B cell (primary cell): ENCODE measurements at regions of chr2 and their contacts with region 1.

Region 1: DNA sequence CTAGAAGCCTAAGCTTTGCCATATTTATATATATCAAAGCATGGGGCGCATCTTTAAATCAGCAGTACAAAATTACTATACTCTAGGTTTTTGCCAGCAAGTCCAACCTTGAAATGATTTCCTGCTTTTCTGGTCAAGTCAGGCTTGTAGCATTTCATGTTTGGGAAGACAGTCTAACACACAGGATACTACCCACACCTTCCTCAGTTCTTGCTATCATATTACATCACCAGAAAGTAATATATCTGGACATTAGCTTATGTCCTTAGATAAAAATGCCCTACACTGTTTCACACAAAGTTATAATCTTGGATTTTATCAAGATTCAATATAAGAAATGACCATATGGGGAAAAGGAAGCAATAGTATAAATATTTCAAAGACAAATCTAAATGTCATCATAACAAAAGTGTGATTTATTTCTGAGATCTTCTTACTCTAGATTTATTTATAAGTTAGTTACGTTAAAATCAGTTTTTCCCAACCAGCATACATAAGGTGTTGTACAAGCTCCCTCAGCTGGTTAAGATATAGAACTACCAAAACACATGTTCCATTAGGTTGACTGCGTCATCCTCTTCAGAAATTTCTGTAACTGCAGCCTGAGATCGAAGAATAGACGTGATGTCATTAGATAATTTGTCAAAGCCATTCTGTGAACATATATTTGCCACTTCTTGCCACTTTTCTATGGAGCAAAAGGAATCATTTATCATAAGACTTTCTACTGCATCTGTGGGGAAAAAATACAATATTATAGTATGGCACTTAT is 56.7 kb downstream of the CLHC1 start:
- DNase-seq: peak; percentile 68
- ATAC-seq: peak; percentile 88
- H3K4me3 ChIP-seq: peak overlapping the region in 1 of 5 experiments; percentile 34
- H3K4me3 Mint-ChIP-seq: peak overlapping the region; percentile 11
- H3K27ac ChIP-seq: no peak overlapping the region
- H3K27ac Mint-ChIP-seq: no peak overlapping the region
- H3K4me1 ChIP-seq: peaks cover 0 to 4% of the 10 kb centered on the region in 2 donors
- H3K4me1 Mint-ChIP-seq: peaks cover 7% of the 10 kb centered on the region
- H3K27me3 ChIP-seq: no peaks in the 10 kb centered on the region
- H3K27me3 Mint-ChIP-seq: no peaks in the 10 kb centered on the region
- CTCF ChIP-seq: peak; percentile 74

Region 2: GRCh38 chr2:54657664-54658083 is 517.8 kb before region 1 on chr2:
- CTCF ChIA-PET with region 1: interaction called, 10 read pairs
- POLR2A ChIA-PET with region 1: no interaction called
- intact Hi-C with region 1: no loop called
- DNase-seq: peak; percentile 42
- ATAC-seq: peak; percentile 65
- H3K4me3 ChIP-seq: no peak overlapping the region
- H3K4me3 Mint-ChIP-seq: no peak overlapping the region
- H3K27ac ChIP-seq: no peak overlapping the region
- H3K27ac Mint-ChIP-seq: peak overlapping the region; percentile 53
- H3K4me1 ChIP-seq: no peaks in the 10 kb centered on the region
- H3K4me1 Mint-ChIP-seq: no peaks in the 10 kb centered on the region
- H3K27me3 ChIP-seq: no peaks in the 10 kb centered on the region
- H3K27me3 Mint-ChIP-seq: no peaks in the 10 kb centered on the region
- CTCF ChIP-seq: peak; percentile 67

Region 3: GRCh38 chr2:54665436-54665856 is 510.0 kb before region 1 on chr2:
- CTCF ChIA-PET with region 1: interaction called, 11 read pairs
- POLR2A ChIA-PET with region 1: no interaction called
- intact Hi-C with region 1: loop called (anchors 1 kb)
- DNase-seq: peak; percentile 65
- ATAC-seq: peak; percentile 60
- H3K4me3 ChIP-seq: no peak overlapping the region
- H3K4me3 Mint-ChIP-seq: no peak overlapping the region
- H3K27ac ChIP-seq: no peak overlapping the region
- H3K27ac Mint-ChIP-seq: no peak overlapping the region
- H3K4me1 ChIP-seq: no peaks in the 10 kb centered on the region
- H3K4me1 Mint-ChIP-seq: no peaks in the 10 kb centered on the region
- H3K27me3 ChIP-seq: no peaks in the 10 kb centered on the region
- H3K27me3 Mint-ChIP-seq: no peaks in the 10 kb centered on the region
- CTCF ChIP-seq: peak; percentile 76

Region 4: DNA sequence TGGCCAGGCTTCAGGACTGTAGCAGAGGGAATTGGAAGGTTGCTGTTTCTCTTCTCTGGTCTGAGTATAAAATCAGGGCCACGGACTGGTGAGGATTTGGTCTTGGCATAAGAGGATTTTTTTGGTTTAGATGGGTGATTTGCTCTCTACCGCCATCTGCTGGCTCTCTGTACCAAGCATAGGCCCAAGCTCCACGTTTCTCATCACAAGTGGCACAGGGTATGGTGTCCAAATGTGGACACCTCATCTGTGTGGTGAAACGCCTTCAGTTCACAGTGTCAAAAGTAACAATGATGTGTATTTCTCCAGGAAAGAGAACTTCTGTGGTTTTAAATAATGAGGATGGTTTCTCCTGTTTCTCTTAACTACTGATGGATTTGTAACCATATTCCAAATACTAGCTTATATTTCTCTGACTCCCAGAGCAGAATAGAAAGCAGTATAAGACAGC is 336.8 kb before region 1 on chr2:
- CTCF ChIA-PET with region 1: interaction called, 18 read pairs
- POLR2A ChIA-PET with region 1: no interaction called
- intact Hi-C with region 1: no loop called
- DNase-seq: peak; percentile 78
- ATAC-seq: peak; percentile 83
- H3K4me3 ChIP-seq: no peak overlapping the region
- H3K4me3 Mint-ChIP-seq: no peak overlapping the region
- H3K27ac ChIP-seq: no peak overlapping the region
- H3K27ac Mint-ChIP-seq: peak overlapping the region; percentile 46
- H3K4me1 ChIP-seq: peaks cover 0 to 4% of the 10 kb centered on the region in 2 donors
- H3K4me1 Mint-ChIP-seq: peaks cover 4% of the 10 kb centered on the region
- H3K27me3 ChIP-seq: no peaks in the 10 kb centered on the region
- H3K27me3 Mint-ChIP-seq: no peaks in the 10 kb centered on the region
- CTCF ChIP-seq: peak; percentile 97

Region 5: DNA sequence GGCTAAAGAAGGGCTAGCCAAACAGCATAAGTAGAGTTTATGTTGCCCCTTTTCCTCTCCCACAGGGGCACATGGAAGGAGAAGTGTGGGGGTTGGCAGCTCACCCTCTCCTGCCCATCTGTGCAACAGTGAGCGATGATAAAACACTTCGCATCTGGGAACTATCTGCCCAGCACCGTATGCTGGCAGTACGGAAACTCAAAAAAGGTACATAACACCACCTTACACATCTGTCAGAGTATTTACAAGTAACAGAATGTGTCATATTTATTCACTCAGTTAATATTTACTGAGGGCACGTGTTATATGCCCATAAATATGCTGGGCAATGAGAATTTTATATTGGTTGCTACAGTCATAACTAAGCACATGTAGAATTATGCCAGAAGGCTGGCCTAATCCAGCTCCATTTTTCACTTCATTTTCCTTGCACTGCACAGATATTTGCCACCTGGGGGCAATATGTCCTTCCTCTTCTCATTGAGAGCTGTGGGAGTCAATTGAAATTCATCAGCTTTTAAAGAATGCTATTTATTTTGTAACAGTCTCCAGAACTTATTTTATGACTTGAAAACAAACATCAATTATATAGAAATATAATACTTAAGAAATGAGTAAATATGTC is 275.8 kb before region 1 on chr2:
- CTCF ChIA-PET with region 1: interaction called, 40 read pairs
- POLR2A ChIA-PET with region 1: no interaction called
- intact Hi-C with region 1: loop called (anchors 1 kb)
- DNase-seq: peak; percentile 27
- ATAC-seq: peak; percentile 36
- H3K4me3 ChIP-seq: no peak overlapping the region
- H3K4me3 Mint-ChIP-seq: no peak overlapping the region
- H3K27ac ChIP-seq: no peak overlapping the region
- H3K27ac Mint-ChIP-seq: no peak overlapping the region
- H3K4me1 ChIP-seq: no peaks in the 10 kb centered on the region
- H3K4me1 Mint-ChIP-seq: no peaks in the 10 kb centered on the region
- H3K27me3 ChIP-seq: no peaks in the 10 kb centered on the region
- H3K27me3 Mint-ChIP-seq: no peaks in the 10 kb centered on the region
- CTCF ChIP-seq: peak; percentile 29

Region 6: GRCh38 chr2:54924121-54924520 is 251.3 kb before region 1 on chr2:
- CTCF ChIA-PET with region 1: no interaction called
- POLR2A ChIA-PET with region 1: no interaction called
- intact Hi-C with region 1: no loop called
- DNase-seq: no peak
- ATAC-seq: no peak
- H3K4me3 ChIP-seq: no peak overlapping the region
- H3K4me3 Mint-ChIP-seq: no peak overlapping the region
- H3K27ac ChIP-seq: no peak overlapping the region
- H3K27ac Mint-ChIP-seq: no peak overlapping the region
- H3K4me1 ChIP-seq: no peaks in the 10 kb centered on the region
- H3K4me1 Mint-ChIP-seq: no peaks in the 10 kb centered on the region
- H3K27me3 ChIP-seq: peaks cover 0 to 3% (median 0%) of the 10 kb centered on the region in 4 experiments
- H3K27me3 Mint-ChIP-seq: no peaks in the 10 kb centered on the region
- CTCF ChIP-seq: no peak

Region 7: GRCh38 chr2:55010149-55010591 is 165.3 kb before region 1 on chr2:
- CTCF ChIA-PET with region 1: interaction called, 190 read pairs
- POLR2A ChIA-PET with region 1: no interaction called
- intact Hi-C with region 1: loop called (anchors 1 kb)
- DNase-seq: peak; percentile 78
- ATAC-seq: peak; percentile 95
- H3K4me3 ChIP-seq: peak overlapping the region; percentile 2 to 48 (median 38)
- H3K4me3 Mint-ChIP-seq: peak overlapping the region; percentile 91
- H3K27ac ChIP-seq: peak overlapping the region; percentile 1 to 73
- H3K27ac Mint-ChIP-seq: peak overlapping the region; percentile 55
- H3K4me1 ChIP-seq: peaks cover 19 to 43% of the 10 kb centered on the region in 2 donors
- H3K4me1 Mint-ChIP-seq: peaks cover 63% of the 10 kb centered on the region
- H3K27me3 ChIP-seq: no peaks in the 10 kb centered on the region
- H3K27me3 Mint-ChIP-seq: no peaks in the 10 kb centered on the region
- CTCF ChIP-seq: no peak

Region 8: DNA sequence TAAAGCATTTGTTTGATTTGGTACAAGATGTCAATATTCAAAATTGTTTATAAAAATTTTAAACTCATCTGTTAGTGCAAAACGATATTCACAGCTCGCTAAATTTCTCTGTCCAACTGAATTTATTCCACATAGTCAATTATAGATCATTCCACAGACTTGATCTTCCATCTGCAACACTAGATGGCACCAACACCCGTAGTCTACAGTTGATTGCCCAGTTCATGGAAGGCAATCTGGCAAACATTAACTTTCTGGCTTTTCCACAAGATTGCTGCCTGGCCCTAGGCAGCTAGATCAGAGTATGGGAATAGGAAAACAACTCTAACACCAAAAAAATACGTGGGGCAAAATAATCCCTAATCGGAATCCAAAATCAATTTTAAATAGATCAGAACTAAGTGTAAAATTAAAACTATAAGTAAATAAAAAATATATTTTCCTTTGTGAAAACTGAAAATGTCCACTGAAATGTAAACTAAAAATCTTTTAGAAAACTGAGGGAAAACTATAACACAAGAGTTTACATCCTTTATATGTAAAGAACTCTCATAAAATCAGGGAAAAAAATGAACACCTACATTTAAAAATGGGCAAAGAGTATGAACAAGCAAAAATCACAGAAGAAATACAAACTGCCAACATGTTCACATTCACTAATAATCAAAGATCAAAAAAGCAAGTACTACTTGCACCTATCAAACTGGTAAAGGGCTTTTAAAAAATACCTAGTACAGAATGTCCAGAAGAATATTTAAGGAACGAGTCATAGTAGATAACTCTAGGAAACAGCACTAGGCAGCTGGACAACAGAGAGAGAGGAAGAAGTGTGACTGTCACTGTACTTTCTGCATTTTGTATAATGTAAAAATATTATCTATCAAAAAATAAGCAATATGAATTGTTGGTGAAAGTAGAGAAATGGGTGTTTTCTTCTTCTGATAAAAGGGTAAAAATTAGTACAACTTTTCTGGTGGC is 160.2 kb before region 1 on chr2:
- CTCF ChIA-PET with region 1: interaction called, 190 read pairs
- POLR2A ChIA-PET with region 1: no interaction called
- intact Hi-C with region 1: loop called (anchors 1 kb)
- DNase-seq: peak; percentile 63
- ATAC-seq: peak; percentile 37
- H3K4me3 ChIP-seq: no peak overlapping the region
- H3K4me3 Mint-ChIP-seq: no peak overlapping the region
- H3K27ac ChIP-seq: no peak overlapping the region
- H3K27ac Mint-ChIP-seq: peak overlapping the region; percentile 22
- H3K4me1 ChIP-seq: peaks cover 21 to 41% of the 10 kb centered on the region in 2 donors
- H3K4me1 Mint-ChIP-seq: peaks cover 57% of the 10 kb centered on the region
- H3K27me3 ChIP-seq: no peaks in the 10 kb centered on the region
- H3K27me3 Mint-ChIP-seq: no peaks in the 10 kb centered on the region
- CTCF ChIP-seq: peak; percentile 64

Region 9: DNA sequence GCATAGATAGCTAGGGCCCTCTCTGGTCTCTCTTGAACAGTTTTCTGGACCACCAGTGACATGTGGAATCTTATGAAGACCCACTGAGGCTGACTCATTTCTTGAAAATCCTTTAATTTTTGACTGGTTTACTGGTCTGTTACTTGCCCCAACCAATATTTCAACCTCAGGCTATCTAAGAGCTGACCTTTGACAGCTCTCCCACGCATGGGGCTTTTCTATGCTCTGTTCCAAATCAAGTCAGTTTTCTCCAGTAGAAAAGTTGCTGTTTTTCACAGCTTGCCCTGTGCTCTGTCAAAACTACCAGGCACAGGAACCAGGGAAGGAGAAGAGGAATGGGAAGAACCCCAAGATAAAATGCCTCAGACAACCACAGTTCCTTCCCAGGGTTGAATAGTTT is 139.5 kb after region 1 on chr2:
- CTCF ChIA-PET with region 1: no interaction called
- POLR2A ChIA-PET with region 1: no interaction called
- intact Hi-C with region 1: no loop called
- DNase-seq: no peak
- ATAC-seq: no peak
- H3K4me3 ChIP-seq: no peak overlapping the region
- H3K4me3 Mint-ChIP-seq: no peak overlapping the region
- H3K27ac ChIP-seq: no peak overlapping the region
- H3K27ac Mint-ChIP-seq: no peak overlapping the region
- H3K4me1 ChIP-seq: no peaks in the 10 kb centered on the region
- H3K4me1 Mint-ChIP-seq: no peaks in the 10 kb centered on the region
- H3K27me3 ChIP-seq: no peaks in the 10 kb centered on the region
- H3K27me3 Mint-ChIP-seq: no peaks in the 10 kb centered on the region
- CTCF ChIP-seq: no peak